ENCODE measurements at regions of chr4 and their contacts with region 1.

Region 1: GRCh38 chr4:109826719-109827118 is 1.1 kb upstream of the RRH start:
- DNase-seq: peak; percentile 33
- ATAC-seq: peak; percentile 81
- H3K4me3 ChIP-seq: no peak overlapping the region
- H3K27ac ChIP-seq: no peak overlapping the region
- H3K4me1 ChIP-seq: no peaks in the 10 kb centered on the region
- H3K27me3 ChIP-seq: no peaks in the 10 kb centered on the region
- CTCF ChIP-seq: peak; percentile 62
- POLR2A ChIP-seq: no peak
- RAD21 ChIP-seq: peak; percentile 61

Region 2: DNA sequence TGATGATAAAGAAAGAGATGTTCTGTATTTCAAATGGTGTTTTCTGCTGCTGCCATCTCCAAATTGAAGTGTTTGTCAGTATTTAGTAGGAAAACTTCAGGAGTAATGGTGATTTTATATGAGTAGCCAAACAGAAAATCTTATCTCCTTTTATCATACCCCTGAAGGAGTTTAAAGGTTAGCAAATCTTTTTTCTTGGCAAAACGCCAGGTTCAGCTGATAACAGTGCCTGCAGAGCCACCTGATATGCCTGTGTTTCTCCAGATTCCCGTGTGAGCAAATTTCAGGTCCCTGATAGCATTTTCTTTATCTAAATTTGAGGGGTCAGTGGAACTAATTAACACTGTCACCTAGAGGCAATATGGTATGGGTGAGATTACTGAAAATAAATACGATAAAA is 998.1 kb before region 1 on chr4:
- CTCF ChIA-PET with region 1: no interaction called
- POLR2A ChIA-PET with region 1: no interaction called
- dilution Hi-C with region 1: no loop called
- in situ Hi-C with region 1: no loop called
- intact Hi-C with region 1: loop called (anchors 10 kb)
- DNase-seq: no peak
- ATAC-seq: no peak
- H3K4me3 ChIP-seq: no peak overlapping the region
- H3K27ac ChIP-seq: no peak overlapping the region
- H3K4me1 ChIP-seq: no peaks in the 10 kb centered on the region
- H3K27me3 ChIP-seq: peaks cover 5% of the 10 kb centered on the region
- CTCF ChIP-seq: no peak
- POLR2A ChIP-seq: no peak
- RAD21 ChIP-seq: no peak

Region 3: DNA sequence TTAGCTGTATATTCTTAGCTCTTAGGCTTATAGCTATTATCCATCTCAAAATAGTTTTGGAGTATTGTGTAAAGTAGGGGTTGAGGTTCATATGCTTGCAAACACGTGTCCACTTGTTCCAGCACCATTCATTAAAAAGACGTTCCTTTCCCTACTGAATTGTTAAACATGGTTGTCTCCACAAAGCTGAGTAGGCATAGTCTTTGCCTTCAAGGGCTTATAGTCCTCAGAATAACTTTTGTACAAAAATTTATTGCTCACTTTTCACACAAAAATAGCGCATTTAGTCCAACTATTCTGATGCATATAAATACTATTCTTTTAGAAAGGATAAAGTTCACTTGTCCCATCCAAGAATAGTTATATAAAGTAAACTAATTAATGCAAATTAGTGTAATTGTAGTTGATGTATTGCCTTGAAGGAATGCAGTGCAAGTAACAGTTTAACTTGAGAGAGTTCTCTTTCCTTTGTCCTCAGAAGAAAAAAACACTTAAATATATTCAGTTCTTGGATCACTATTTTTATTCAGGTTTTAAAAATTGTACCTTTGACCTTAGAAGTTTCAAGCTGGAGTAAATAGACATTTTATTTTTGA is 35.3 kb after region 1 on chr4:
- CTCF ChIA-PET with region 1: no interaction called
- POLR2A ChIA-PET with region 1: no interaction called
- dilution Hi-C with region 1: no loop called
- in situ Hi-C with region 1: no loop called
- intact Hi-C with region 1: no loop called
- DNase-seq: no peak
- ATAC-seq: no peak
- H3K4me3 ChIP-seq: no peak overlapping the region
- H3K27ac ChIP-seq: no peak overlapping the region
- H3K4me1 ChIP-seq: no peaks in the 10 kb centered on the region
- H3K27me3 ChIP-seq: no peaks in the 10 kb centered on the region
- CTCF ChIP-seq: no peak
- POLR2A ChIP-seq: no peak
- RAD21 ChIP-seq: no peak

Region 4: GRCh38 chr4:109977854-109978501 is 151.3 kb after region 1 on chr4:
- CTCF ChIA-PET with region 1: no interaction called
- POLR2A ChIA-PET with region 1: no interaction called
- dilution Hi-C with region 1: no loop called
- in situ Hi-C with region 1: no loop called
- intact Hi-C with region 1: loop called (anchors 5 kb)
- DNase-seq: peak; percentile 60
- ATAC-seq: peak; percentile 56
- H3K4me3 ChIP-seq: no peak overlapping the region
- H3K27ac ChIP-seq: no peak overlapping the region
- H3K4me1 ChIP-seq: peaks cover 6% of the 10 kb centered on the region; the same call in 1 of the 2 replicates
- H3K27me3 ChIP-seq: no peaks in the 10 kb centered on the region
- CTCF ChIP-seq: peak; percentile 74
- POLR2A ChIP-seq: no peak
- RAD21 ChIP-seq: peak; percentile 69

Region 5: GRCh38 chr4:110224812-110225211 is 398.1 kb after region 1 on chr4:
- CTCF ChIA-PET with region 1: no interaction called
- POLR2A ChIA-PET with region 1: no interaction called
- dilution Hi-C with region 1: no loop called
- in situ Hi-C with region 1: no loop called
- intact Hi-C with region 1: no loop called
- DNase-seq: peak; percentile 57
- ATAC-seq: peak; percentile 67
- H3K4me3 ChIP-seq: no peak overlapping the region
- H3K27ac ChIP-seq: no peak overlapping the region
- H3K4me1 ChIP-seq: peaks cover 1% of the 10 kb centered on the region; the same call in 1 of the 2 replicates
- H3K27me3 ChIP-seq: no peaks in the 10 kb centered on the region; the same call in none of the 2 replicates
- CTCF ChIP-seq: no peak
- POLR2A ChIP-seq: no peak
- RAD21 ChIP-seq: no peak